ENCODE measurements at regions of chr12 and their contacts with region 1.

Region 1: DNA sequence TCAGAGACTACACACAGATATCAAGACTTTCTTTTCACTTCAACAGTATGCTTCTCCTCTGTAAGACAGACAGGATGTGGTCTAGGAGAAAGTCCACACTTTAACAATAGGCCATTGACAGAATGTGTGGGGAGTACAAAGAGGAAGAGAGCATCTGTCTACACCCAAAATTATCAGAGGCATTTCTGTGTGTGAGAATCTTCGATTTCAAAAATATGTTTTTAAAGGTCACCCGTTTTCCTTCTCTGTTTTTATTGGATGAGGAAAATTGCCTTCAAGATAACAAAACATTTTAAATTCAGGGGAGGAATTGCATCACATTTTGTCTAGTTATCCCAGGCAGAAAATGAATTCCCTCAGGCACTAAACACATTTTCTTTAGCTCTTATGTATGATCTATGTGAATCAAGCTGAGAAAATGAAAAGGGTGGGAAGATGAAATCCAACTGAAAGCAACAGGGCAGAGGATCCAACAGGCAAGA is 16.4 kb downstream of the NAV3 start:
- DNase-seq: peak; percentile 39
- ATAC-seq: no peak; the same call in 1 of the 2 replicates
- H3K4me3 ChIP-seq: no peak overlapping the region
- H3K27ac ChIP-seq: no peak overlapping the region; the same call in 1 of the 2 replicates
- H3K4me1 ChIP-seq: peaks cover 32% of the 10 kb centered on the region
- H3K27me3 ChIP-seq: peaks cover 8% of the 10 kb centered on the region; the same call in 1 of the 2 replicates
- CTCF ChIP-seq: no peak

Region 2: DNA sequence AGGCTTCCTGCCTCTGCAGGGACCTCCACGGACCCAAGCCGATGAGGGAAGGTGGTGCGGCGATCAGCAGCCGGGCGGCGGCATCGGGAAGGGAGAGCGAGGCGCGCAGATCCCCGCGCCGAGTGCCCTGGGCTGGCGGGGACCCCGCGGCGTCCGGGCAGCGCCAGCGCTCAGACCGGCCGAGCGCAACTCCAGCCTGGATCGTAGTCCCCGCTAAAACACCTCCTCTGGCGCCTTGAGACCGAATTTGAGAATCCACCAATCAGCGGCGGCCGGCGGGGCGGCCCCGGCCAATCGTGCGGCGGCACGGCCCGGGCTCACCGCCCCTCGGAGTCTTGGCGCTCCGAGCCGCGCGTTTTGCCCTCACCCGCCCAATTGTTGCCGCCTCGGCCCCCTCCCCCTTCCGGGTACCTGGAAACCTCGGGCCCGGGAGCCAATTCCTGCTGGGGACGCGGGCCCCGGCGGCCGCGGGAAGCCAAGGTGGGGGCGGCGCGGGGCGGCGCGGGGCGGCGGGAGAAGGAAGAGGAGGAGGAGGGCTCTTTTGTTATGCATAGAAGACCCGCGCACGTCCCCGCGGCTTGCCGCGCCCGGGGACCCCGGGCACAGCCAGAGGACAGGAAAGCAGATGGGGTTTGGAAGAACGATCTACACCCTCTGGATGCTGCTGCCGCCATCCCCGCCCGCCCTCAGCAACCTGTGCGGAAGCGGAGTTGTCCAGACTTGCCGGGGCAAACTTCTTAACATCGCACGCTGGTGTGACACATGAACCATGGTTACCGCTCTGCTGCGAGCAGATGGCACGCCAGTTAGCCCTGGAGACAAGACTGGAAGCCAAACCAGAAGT is 781.5 kb before region 1 on chr12 and contains the start of gene E2F7:
- CTCF ChIA-PET with region 1: no interaction called
- POLR2A ChIA-PET with region 1: no interaction called
- intact Hi-C with region 1: loop called (anchors 5 kb)
- DNase-seq: peak; percentile 97
- ATAC-seq: peak; percentile 83
- H3K4me3 ChIP-seq: peak within 1 kb of the TSS; percentile 94
- H3K27ac ChIP-seq: peak within 1 kb of the TSS; percentile 84
- H3K4me1 ChIP-seq: peaks cover 35% of the 10 kb centered on the region
- H3K27me3 ChIP-seq: no peaks in the 10 kb centered on the region
- CTCF ChIP-seq: no peak
- total RNA-seq, gene E2F7: 17.2 and 19.0 TPM in 2 replicates

Region 3: GRCh38 chr12:77751939-77752338 is 95.2 kb before region 1 on chr12:
- CTCF ChIA-PET with region 1: no interaction called
- POLR2A ChIA-PET with region 1: no interaction called
- intact Hi-C with region 1: loop called (anchors 2 kb)
- DNase-seq: peak; percentile 82
- ATAC-seq: peak; percentile 95
- H3K4me3 ChIP-seq: no peak overlapping the region
- H3K27ac ChIP-seq: no peak overlapping the region
- H3K4me1 ChIP-seq: peaks cover 13% of the 10 kb centered on the region
- H3K27me3 ChIP-seq: peaks cover 40% of the 10 kb centered on the region
- CTCF ChIP-seq: no peak

Region 4: DNA sequence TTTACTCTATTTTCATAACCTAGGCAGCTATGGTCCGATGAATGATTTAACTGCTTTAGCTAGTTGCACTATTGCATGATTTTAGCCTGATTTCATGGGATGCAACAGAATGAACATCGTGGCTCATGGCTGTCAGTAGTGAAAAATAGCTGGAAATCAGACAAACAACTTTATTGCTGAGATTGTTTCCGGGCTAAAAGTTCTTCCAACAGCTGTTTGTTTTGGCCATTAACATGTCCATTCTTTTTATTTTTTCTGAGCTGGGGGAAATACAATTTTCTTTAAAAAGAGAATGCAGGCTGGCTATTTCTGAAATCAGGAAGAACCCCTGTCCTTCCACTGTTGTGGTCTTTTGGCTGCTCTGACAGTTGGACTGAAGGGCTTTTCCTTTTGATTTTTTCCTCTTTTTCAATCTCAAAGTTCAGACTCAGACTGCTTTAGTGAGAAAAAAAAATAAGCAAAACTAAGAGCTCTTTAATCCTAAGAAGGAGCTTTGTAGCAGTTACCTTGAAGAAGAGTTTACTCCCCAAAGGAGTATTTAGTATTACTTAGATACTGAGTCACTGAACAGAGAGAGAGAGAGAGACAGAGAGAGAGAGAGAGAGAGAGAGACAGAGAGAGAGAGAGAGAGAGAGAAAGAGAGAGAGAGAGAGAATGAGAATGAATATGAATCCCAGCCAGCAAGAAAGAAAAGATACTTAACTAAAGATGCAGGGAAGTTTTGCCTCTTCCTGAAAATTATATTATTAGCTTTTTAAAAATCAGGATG is 16.3 kb before region 1 on chr12 and contains the start of gene NAV3:
- CTCF ChIA-PET with region 1: no interaction called
- POLR2A ChIA-PET with region 1: interaction called, 12 read pairs
- intact Hi-C with region 1: loop called (anchors 1 kb)
- DNase-seq: no peak
- ATAC-seq: peak; percentile 76
- H3K4me3 ChIP-seq: no peak within 1 kb of the TSS
- H3K27ac ChIP-seq: no peak within 1 kb of the TSS
- H3K4me1 ChIP-seq: no peaks in the 10 kb centered on the region
- H3K27me3 ChIP-seq: peaks cover 8% of the 10 kb centered on the region; the same call in 1 of the 2 replicates
- CTCF ChIP-seq: no peak
- total RNA-seq, gene NAV3: 1.6 and 6.8 TPM in 2 replicates

Region 5: DNA sequence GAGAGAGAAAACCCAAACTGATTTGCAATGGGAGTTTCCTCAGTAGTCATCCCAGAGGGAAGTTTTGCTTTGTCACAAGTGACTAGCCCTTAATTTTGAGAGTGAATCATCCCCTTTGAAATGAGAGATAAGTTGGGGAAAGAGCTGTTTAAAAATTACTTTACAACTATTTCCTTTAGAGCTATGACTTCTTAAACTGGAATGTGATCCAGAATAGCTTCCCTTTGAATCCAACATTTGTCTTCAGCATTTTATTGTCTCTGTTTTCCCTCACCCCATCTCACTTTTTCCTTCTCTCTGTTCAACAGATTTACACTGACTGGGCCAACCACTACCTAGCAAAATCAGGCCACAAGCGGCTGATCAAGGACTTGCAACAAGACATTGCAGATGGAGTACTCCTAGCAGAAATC is 92.9 kb after region 1 on chr12:
- CTCF ChIA-PET with region 1: no interaction called
- POLR2A ChIA-PET with region 1: interaction called, 4 read pairs
- intact Hi-C with region 1: loop called (anchors 5 kb)
- DNase-seq: peak; percentile 90
- ATAC-seq: peak; percentile 89
- H3K4me3 ChIP-seq: peak overlapping the region; percentile 56
- H3K27ac ChIP-seq: peak overlapping the region; percentile 68
- H3K4me1 ChIP-seq: peaks cover 46% of the 10 kb centered on the region
- H3K27me3 ChIP-seq: no peaks in the 10 kb centered on the region
- CTCF ChIP-seq: no peak